ENCODE measurements at regions of chr2 and their contacts with region 1.

Region 1: DNA sequence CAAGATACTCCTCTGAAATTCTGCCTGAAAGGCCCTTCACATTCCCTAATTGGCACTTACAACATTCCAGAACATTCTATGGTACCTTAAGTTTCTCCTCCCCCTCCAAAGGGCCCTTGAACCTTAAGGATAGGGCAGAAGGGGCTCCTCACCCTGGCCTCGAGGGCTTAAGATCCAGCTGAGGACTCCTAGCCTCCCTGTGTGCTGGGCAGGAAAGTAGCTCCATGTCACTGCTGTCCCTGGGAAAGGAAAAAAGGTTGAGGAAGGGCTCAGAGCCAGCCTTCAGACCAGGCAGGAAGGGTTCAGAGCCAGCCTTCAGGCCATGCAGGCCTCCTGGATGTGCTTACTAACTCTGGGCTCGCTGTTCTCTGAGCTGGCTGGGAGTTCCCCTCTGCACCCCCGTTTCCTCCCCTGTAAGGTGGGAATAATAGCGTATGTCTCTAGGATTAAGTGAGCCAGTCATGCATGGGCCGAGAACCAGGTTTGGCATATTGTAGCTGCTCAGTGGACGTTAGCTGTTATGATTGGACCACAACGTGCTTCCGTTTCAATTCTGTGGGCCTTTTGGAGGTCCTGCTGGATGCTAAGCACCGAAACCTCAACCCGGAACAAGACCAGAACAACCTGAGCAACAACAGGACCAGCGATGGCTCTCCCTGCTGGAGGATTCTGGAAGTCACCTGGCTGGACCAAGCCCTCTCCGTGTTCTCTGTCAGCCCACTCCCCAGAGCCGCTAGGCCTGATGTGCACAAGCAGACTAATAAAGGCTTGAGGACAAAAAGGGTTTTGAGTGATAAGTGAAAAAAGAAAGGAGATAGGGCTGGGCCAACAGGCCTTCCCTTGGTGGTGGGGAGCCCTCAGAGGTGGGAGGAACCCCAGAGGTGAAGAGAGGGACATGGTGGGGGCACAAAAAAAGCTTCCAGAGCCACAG is 1.0 kb upstream of the B3GNT7 start:
- DNase-seq: no peak
- H3K4me3 ChIP-seq: no peak overlapping the region
- H3K27ac ChIP-seq: no peak overlapping the region
- H3K4me1 ChIP-seq: peaks cover 24% of the 10 kb centered on the region
- H3K27me3 ChIP-seq: no peaks in the 10 kb centered on the region
- CTCF ChIP-seq: no peak; the same call in 1 of the 2 replicates

Region 2: GRCh38 chr2:231348173-231348572 is 46.3 kb before region 1 on chr2:
- CTCF ChIA-PET with region 1: no interaction called
- POLR2A ChIA-PET with region 1: no interaction called
- intact Hi-C with region 1: loop called (anchors 5 kb)
- DNase-seq: peak; percentile 62 to 98
- H3K4me3 ChIP-seq: no peak overlapping the region
- H3K27ac ChIP-seq: peak overlapping the region; percentile 81
- H3K4me1 ChIP-seq: peaks cover 38% of the 10 kb centered on the region
- H3K27me3 ChIP-seq: no peaks in the 10 kb centered on the region
- CTCF ChIP-seq: no peak

Region 3: GRCh38 chr2:231364961-231365810 is 29.3 kb before region 1 on chr2:
- CTCF ChIA-PET with region 1: no interaction called
- POLR2A ChIA-PET with region 1: interaction called, 18 read pairs
- intact Hi-C with region 1: no loop called
- DNase-seq: peak; percentile 74 to 95
- H3K4me3 ChIP-seq: peak overlapping the region; percentile 29; the same call in 1 of the 2 replicates
- H3K27ac ChIP-seq: peak overlapping the region; percentile 92
- H3K4me1 ChIP-seq: peaks cover 53% of the 10 kb centered on the region
- H3K27me3 ChIP-seq: no peaks in the 10 kb centered on the region
- CTCF ChIP-seq: no peak

Region 4: GRCh38 chr2:232030229-232030628 is 635.8 kb after region 1 on chr2:
- CTCF ChIA-PET with region 1: no interaction called
- POLR2A ChIA-PET with region 1: no interaction called
- intact Hi-C with region 1: no loop called
- DNase-seq: no peak
- H3K4me3 ChIP-seq: no peak overlapping the region
- H3K27ac ChIP-seq: no peak overlapping the region
- H3K4me1 ChIP-seq: no peaks in the 10 kb centered on the region
- H3K27me3 ChIP-seq: no peaks in the 10 kb centered on the region
- CTCF ChIP-seq: peak; percentile 26; the same call in 1 of the 2 replicates

Measured in PC-9 (cell line).